ENCODE measurements at regions of chr9 and their contacts with region 1.

Region 1: DNA sequence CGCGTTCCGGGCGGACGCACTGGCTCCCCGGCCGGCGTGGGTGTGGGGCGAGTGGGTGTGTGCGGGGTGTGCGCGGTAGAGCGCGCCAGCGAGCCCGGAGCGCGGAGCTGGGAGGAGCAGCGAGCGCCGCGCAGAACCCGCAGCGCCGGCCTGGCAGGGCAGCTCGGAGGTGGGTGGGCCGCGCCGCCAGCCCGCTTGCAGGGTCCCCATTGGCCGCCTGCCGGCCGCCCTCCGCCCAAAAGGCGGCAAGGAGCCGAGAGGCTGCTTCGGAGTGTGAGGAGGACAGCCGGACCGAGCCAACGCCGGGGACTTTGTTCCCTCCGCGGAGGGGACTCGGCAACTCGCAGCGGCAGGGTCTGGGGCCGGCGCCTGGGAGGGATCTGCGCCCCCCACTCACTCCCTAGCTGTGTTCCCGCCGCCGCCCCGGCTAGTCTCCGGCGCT is at the start of gene DAPK1:
- DNase-seq: peak; percentile 21 to 60
- ATAC-seq: peak; percentile 71 to 90 (median 79)
- H3K4me3 ChIP-seq: peak within 1 kb of the TSS; percentile 46 to 76 (median 64)
- H3K27ac ChIP-seq: peak within 1 kb of the TSS in 8 of 10 donors; percentile 2 to 91 (median 57)
- H3K4me1 ChIP-seq: peaks cover 0 to 58% (median 12%) of the 10 kb centered on the region in 9 donors
- H3K27me3 ChIP-seq: peaks cover 7 to 61% (median 45%) of the 10 kb centered on the region in 7 donors
- CTCF ChIP-seq: peak in 3 of 9 donors; percentile 5 to 18 (median 14)
- total RNA-seq, gene DAPK1: 2.3 to 15.5 (median 4.3) TPM

Region 2: DNA sequence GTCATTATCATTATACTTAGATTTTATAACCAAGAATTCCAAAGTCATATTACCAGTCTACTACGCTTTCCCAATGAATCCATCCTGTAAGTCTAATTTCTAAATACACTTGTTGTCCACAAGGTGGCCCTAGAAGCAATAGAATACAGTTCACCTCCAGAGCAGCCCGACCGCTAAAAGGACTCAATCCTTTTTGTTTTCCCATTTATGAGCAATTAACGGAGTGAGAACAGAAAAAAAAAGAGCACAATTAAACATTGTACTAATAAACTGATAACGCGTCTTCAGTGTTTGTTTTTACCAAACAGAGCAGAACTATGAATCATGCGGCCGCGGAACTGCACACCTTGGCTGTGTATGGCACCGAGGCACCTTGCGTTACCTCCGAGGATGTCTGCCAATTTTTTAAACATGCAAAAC is 160.7 kb before region 1 on chr9:
- intact Hi-C with region 1: loop called in 1 of 10 experiments (anchors 10 kb)
- DNase-seq: peak in 1 of 2 donors; percentile 40
- ATAC-seq: peak in 7 of 8 donors; percentile 55 to 85 (median 79)
- H3K4me3 ChIP-seq: peak overlapping the region in 9 of 10 donors; percentile 6 to 42 (median 33)
- H3K27ac ChIP-seq: no peak overlapping the region
- H3K4me1 ChIP-seq: peaks cover 0 to 15% (median 7%) of the 10 kb centered on the region in 9 donors
- H3K27me3 ChIP-seq: peaks cover 0 to 30% (median 20%) of the 10 kb centered on the region in 7 donors
- CTCF ChIP-seq: peak; percentile 41 to 73 (median 67)

Region 3: DNA sequence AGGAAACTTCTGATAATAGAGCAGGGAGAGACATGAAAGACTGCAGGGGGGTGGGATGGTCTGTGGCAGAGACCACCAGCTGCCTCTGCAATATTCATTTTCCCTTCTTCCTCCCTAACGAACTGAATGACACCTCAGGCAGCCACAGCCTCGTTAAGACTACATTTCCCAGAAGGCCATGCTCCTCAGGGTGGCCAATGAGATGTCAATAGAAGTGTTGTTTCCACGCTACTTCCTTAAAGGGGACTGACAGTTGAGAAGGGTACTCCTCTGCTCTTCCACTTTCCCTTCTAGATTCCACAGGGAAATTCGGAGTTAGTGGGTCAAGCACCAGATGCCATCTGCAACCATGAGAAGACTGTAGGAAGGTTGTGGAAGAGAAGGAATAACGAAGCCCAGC is 52.0 kb before region 1 on chr9:
- intact Hi-C with region 1: loop called in 1 of 10 experiments (anchors 10 kb)
- DNase-seq: peak in 1 of 2 donors; percentile 9
- ATAC-seq: peak in 6 of 8 donors; percentile 62 to 79 (median 72)
- H3K4me3 ChIP-seq: peak overlapping the region in 1 of 10 donors; percentile 18
- H3K27ac ChIP-seq: no peak overlapping the region
- H3K4me1 ChIP-seq: no peaks in the 10 kb centered on the region
- H3K27me3 ChIP-seq: no peaks in the 10 kb centered on the region
- CTCF ChIP-seq: no peak

Region 4: GRCh38 chr9:87620731-87621322 is 123.2 kb after region 1 on chr9:
- intact Hi-C with region 1: no loop called
- DNase-seq: no peak
- ATAC-seq: no peak
- H3K4me3 ChIP-seq: no peak overlapping the region
- H3K27ac ChIP-seq: no peak overlapping the region
- H3K4me1 ChIP-seq: peaks cover 0 to 3% (median 0%) of the 10 kb centered on the region in 9 donors
- H3K27me3 ChIP-seq: peaks cover 0 to 8% (median 0%) of the 10 kb centered on the region in 7 donors
- CTCF ChIP-seq: no peak

Measured in heart right ventricle (tissue), 16 donors.